Mammary epithelial cell (primary cell): ENCODE measurements at regions of chr11 and their contacts with region 1.

Region 1: GRCh38 chr11:20056109-20056949 is 103.9 kb downstream of the DBX1 start:
- DNase-seq: peak; percentile 88
- H3K4me3 ChIP-seq: no peak overlapping the region
- H3K27ac ChIP-seq: peak overlapping the region; percentile 91
- H3K4me1 ChIP-seq: peaks cover 84% of the 10 kb centered on the region
- H3K27me3 ChIP-seq: no peaks in the 10 kb centered on the region
- CTCF ChIP-seq: no peak

Region 2: GRCh38 chr11:19951558-19952115 is 104.7 kb before region 1 on chr11:
- CTCF ChIA-PET with region 1: interaction called, 5 read pairs
- dilution Hi-C with region 1: no loop called
- in situ Hi-C with region 1: no loop called
- intact Hi-C with region 1: loop called (anchors 2 kb)
- DNase-seq: peak; percentile 62
- H3K4me3 ChIP-seq: no peak overlapping the region
- H3K27ac ChIP-seq: no peak overlapping the region
- H3K4me1 ChIP-seq: peaks cover 17% of the 10 kb centered on the region
- H3K27me3 ChIP-seq: no peaks in the 10 kb centered on the region
- CTCF ChIP-seq: peak; percentile 47 to 57

Region 3: DNA sequence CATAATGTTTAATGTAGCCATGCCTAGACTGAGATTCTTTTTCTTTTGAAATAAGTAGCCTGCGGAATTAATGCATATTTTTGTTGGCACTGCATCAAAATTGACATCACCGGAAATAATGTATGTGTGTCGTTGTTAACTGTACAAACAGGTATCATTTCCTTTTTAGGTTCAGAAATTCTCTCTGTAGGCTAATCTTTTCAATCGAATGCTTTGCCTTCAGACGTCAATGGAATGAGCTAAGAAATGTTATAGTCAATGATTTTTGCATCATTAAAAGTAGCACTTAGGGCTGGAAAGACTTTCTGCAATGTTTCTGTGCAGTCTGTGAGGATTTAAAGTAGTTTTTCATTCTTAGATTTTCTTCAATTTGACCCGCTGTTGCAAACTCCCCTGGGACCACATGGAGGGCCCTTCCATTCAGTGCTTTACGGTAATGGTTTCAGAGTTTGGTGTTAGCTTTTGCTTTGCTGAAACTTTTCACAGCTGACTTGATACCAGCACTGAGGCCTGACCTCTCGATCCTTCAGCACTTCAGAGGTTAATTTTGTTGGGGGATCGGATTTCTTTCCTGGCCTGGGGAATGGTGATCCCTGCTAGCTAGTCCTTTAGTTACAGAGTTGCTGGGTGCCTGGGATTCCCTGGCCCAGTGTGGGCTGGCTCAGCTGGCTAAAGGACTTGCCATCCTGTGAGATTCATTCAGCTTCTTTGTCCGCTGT is 33.8 kb before region 1 on chr11:
- CTCF ChIA-PET with region 1: interaction called, 11 read pairs
- dilution Hi-C with region 1: no loop called
- in situ Hi-C with region 1: no loop called
- intact Hi-C with region 1: loop called (anchors 2 kb)
- DNase-seq: peak; percentile 67
- H3K4me3 ChIP-seq: peak overlapping the region; percentile 43 to 64 (median 58)
- H3K27ac ChIP-seq: peak overlapping the region; percentile 26
- H3K4me1 ChIP-seq: peaks cover 48% of the 10 kb centered on the region
- H3K27me3 ChIP-seq: no peaks in the 10 kb centered on the region
- CTCF ChIP-seq: no peak

Region 4: DNA sequence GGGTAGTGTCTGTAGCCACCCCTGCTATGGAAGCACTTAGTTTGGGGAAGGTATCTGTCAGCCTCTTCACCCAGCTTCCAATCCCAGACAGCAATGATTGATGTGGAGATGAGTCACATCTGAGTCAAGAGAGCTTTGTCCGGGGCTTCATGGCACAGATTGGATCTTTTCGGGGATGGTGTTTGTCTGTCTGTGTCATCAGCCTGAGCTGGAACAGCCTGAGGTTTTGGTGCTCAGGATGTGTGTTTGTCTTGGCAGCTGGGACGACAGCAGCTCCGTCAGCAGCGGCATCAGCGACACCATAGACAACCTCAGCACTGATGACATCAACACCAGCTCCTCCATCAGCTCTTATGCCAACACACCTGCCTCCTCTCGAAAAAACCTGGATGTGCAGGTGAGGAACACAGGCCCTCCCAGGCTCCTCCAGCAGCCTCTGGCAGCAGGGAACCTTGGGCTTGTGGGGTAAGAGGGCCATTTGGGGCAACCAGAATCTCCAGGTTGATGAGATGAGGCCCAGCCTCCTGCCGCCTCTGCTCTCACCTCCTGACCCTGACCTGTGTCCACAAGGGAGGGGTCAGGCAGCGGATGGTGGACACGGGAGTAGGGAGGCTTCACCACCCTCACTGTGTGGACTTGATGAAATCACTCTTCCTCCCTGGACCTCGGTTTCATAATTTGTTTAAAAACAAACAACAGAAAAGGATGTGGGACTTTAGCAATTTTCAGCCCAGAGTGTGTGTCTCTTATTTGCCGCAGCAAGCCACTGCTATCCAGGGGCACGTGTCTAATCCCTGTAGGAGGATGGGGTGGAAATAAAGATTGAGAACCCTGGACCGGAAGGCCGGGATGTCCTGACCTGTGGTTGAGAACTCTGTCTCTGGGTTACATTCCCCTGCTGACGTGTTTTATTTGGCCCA is 20.4 kb before region 1 on chr11:
- CTCF ChIA-PET with region 1: interaction called, 3 read pairs
- dilution Hi-C with region 1: no loop called
- in situ Hi-C with region 1: no loop called
- intact Hi-C with region 1: loop called (anchors 2 kb)
- DNase-seq: peak; percentile 98
- H3K4me3 ChIP-seq: no peak overlapping the region
- H3K27ac ChIP-seq: peak overlapping the region; percentile 41
- H3K4me1 ChIP-seq: peaks cover 46% of the 10 kb centered on the region
- H3K27me3 ChIP-seq: no peaks in the 10 kb centered on the region
- CTCF ChIP-seq: peak in 1 of 2 donors; percentile 9